MCF 10A (cell line): ENCODE measurements at regions of chr21 and their contacts with region 1.

Region 1: GRCh38 chr21:42299324-42300044 is 15.7 kb downstream of the TFF3 start:
- DNase-seq: peak; percentile 24
- H3K4me3 Mint-ChIP-seq: no peak overlapping the region
- H3K27ac Mint-ChIP-seq: no peak overlapping the region
- H3K4me1 Mint-ChIP-seq: no peaks in the 10 kb centered on the region
- H3K27me3 Mint-ChIP-seq: no peaks in the 10 kb centered on the region
- CTCF ChIP-seq: no peak

Region 2: GRCh38 chr21:42309753-42310221 is 10.3 kb after region 1 on chr21:
- CTCF ChIA-PET with region 1: interaction called, 23 read pairs
- POLR2A ChIA-PET with region 1: no interaction called
- intact Hi-C with region 1: no loop called
- DNase-seq: peak; percentile 48
- H3K4me3 Mint-ChIP-seq: no peak overlapping the region
- H3K27ac Mint-ChIP-seq: no peak overlapping the region
- H3K4me1 Mint-ChIP-seq: no peaks in the 10 kb centered on the region
- H3K27me3 Mint-ChIP-seq: no peaks in the 10 kb centered on the region
- CTCF ChIP-seq: peak; percentile 72